CD8-positive, alpha-beta T cell (primary cell): ENCODE measurements at regions of chr3 and their contacts with region 1.

Region 1: DNA sequence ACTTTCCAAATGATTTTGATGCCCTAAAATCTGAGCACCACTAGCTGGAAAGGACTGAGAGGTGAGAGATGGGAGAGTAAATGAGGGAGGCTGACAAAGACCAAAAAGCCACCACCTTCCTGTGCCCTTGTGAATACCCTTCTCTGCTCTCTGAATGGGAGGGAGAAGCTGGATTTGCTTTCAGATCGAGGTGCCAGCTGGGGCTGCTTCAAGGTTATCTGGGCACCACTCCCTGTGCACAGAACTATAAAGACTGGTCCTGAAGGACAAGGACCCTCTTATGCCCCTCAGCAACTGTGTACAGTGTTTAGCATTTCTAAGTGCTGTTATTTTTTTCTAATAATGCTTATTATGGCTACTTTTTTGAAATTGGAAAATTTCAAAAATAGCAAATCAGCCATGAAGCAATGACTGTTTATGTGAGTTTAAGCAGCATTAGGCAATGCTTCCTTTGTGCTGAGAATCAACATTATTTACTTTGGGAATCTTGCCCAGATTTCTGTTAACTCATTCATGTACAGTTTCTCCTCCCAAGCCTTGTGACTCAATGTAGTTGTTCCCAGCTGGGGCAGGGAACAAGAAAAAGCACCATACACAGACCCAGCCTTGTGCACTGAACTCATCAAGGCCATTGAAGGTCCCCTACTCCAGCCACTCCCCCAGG is 37.4 kb upstream of the CDV3 start:
- DNase-seq: no peak
- ATAC-seq: no peak
- H3K4me3 ChIP-seq: no peak overlapping the region
- H3K4me3 Mint-ChIP-seq: no peak overlapping the region
- H3K27ac ChIP-seq: no peak overlapping the region
- H3K27ac Mint-ChIP-seq: no peak overlapping the region
- H3K4me1 ChIP-seq: no peaks in the 10 kb centered on the region
- H3K4me1 Mint-ChIP-seq: no peaks in the 10 kb centered on the region
- H3K27me3 ChIP-seq: no peaks in the 10 kb centered on the region
- H3K27me3 Mint-ChIP-seq: no peaks in the 10 kb centered on the region
- CTCF ChIP-seq: no peak

Region 2: GRCh38 chr3:132290833-132291232 is 1245.3 kb before region 1 on chr3:
- CTCF ChIA-PET with region 1: no interaction called
- POLR2A ChIA-PET with region 1: no interaction called
- intact Hi-C with region 1: loop called in 1 of 2 experiments (anchors 10 kb)
- DNase-seq: peak in 1 of 9 experiments; percentile 4
- ATAC-seq: no peak
- H3K4me3 ChIP-seq: no peak overlapping the region
- H3K4me3 Mint-ChIP-seq: no peak overlapping the region
- H3K27ac ChIP-seq: no peak overlapping the region
- H3K27ac Mint-ChIP-seq: no peak overlapping the region
- H3K4me1 ChIP-seq: no peaks in the 10 kb centered on the region
- H3K4me1 Mint-ChIP-seq: no peaks in the 10 kb centered on the region
- H3K27me3 ChIP-seq: no peaks in the 10 kb centered on the region
- H3K27me3 Mint-ChIP-seq: peaks cover 26% of the 10 kb centered on the region
- CTCF ChIP-seq: no peak

Region 3: DNA sequence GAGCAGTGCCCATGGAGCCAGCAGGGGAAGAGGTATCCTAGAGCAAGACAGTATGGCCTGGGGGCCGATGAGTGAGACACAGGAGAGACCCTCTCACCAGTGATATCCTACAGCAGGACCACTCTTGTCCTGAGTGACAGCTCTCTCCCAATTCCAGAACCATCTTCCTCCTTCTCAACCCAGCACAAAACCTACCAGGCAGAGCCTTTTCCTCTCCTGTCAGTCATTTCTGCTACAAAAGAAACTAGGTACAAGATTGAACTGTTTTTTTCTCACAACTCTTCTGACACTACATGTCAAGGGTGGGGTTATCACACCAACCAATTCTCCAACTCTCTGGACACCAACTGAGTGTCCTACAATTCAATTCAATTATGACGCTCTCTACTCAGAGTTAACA is 1765.6 kb after region 1 on chr3:
- CTCF ChIA-PET with region 1: no interaction called
- POLR2A ChIA-PET with region 1: no interaction called
- intact Hi-C with region 1: no loop called
- DNase-seq: no peak
- ATAC-seq: no peak
- H3K4me3 ChIP-seq: no peak overlapping the region
- H3K4me3 Mint-ChIP-seq: no peak overlapping the region
- H3K27ac ChIP-seq: no peak overlapping the region
- H3K27ac Mint-ChIP-seq: no peak overlapping the region
- H3K4me1 ChIP-seq: no peaks in the 10 kb centered on the region
- H3K4me1 Mint-ChIP-seq: no peaks in the 10 kb centered on the region
- H3K27me3 ChIP-seq: no peaks in the 10 kb centered on the region
- H3K27me3 Mint-ChIP-seq: no peaks in the 10 kb centered on the region
- CTCF ChIP-seq: no peak